CD4-positive, alpha-beta T cell (primary cell): ENCODE measurements at regions of chr15 and their contacts with region 1.

Region 1: DNA sequence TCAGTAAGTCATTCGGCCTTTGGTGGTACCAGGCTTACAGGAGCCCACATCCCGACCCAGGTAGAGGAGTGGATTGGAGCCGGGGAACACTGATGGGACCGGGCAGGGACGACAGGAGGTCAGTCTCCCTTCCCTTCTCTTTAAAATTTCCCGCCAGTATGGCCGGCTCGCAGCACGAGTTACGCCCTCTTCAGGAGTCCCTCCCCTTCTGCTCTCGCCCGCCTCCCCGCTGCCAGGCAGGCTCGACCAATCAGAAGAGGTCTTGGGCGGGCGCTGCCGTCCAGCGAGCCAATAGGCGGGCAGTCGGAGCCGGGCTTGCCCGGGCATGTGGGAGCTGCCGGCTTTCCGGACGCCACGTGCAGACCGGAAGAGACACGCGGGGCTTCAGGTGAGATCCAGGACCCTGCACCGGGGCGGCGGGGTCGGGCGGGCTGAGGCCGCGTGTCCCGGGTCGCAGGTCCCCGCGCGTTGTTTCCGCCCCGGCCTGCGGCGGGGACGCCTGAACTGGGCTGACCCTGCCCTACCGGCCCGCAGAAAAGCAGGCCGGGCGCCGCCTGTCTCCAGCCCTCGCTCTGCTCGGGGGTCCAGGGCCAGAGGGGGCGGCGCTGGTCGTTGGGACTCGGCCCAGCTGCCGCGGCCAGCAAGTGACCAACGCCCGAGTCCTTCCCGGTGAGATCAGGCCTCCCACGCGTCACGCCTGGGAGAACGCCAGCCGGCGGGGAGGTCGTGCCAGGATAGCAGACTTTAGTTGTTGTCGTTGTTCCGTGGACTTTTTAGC is at the start of gene AEN:
- DNase-seq: peak; percentile 91 to 98 (median 94)
- ATAC-seq: peak; percentile 82
- H3K4me3 ChIP-seq: peak within 1 kb of the TSS; percentile 77
- H3K4me3 Mint-ChIP-seq: peak within 1 kb of the TSS; percentile 95
- H3K27ac ChIP-seq: peak within 1 kb of the TSS; percentile 84 to 86
- H3K27ac Mint-ChIP-seq: peak within 1 kb of the TSS; percentile 95
- H3K4me1 ChIP-seq: peaks cover 55% of the 10 kb centered on the region
- H3K4me1 Mint-ChIP-seq: peaks cover 50% of the 10 kb centered on the region
- H3K27me3 ChIP-seq: no peaks in the 10 kb centered on the region
- H3K27me3 Mint-ChIP-seq: peaks cover 9% of the 10 kb centered on the region
- CTCF ChIP-seq: no peak
- total RNA-seq, gene AEN: 40.7 to 43.7 TPM

Region 2: GRCh38 chr15:88323976-88324740 is 297.0 kb before region 1 on chr15:
- CTCF ChIA-PET with region 1: no interaction called
- POLR2A ChIA-PET with region 1: no interaction called
- intact Hi-C with region 1: no loop called
- DNase-seq: no peak
- ATAC-seq: no peak
- H3K4me3 ChIP-seq: no peak overlapping the region
- H3K4me3 Mint-ChIP-seq: no peak overlapping the region
- H3K27ac ChIP-seq: no peak overlapping the region
- H3K27ac Mint-ChIP-seq: no peak overlapping the region
- H3K4me1 ChIP-seq: no peaks in the 10 kb centered on the region
- H3K4me1 Mint-ChIP-seq: no peaks in the 10 kb centered on the region
- H3K27me3 ChIP-seq: no peaks in the 10 kb centered on the region
- H3K27me3 Mint-ChIP-seq: peaks cover 18% of the 10 kb centered on the region
- CTCF ChIP-seq: no peak

Region 3: DNA sequence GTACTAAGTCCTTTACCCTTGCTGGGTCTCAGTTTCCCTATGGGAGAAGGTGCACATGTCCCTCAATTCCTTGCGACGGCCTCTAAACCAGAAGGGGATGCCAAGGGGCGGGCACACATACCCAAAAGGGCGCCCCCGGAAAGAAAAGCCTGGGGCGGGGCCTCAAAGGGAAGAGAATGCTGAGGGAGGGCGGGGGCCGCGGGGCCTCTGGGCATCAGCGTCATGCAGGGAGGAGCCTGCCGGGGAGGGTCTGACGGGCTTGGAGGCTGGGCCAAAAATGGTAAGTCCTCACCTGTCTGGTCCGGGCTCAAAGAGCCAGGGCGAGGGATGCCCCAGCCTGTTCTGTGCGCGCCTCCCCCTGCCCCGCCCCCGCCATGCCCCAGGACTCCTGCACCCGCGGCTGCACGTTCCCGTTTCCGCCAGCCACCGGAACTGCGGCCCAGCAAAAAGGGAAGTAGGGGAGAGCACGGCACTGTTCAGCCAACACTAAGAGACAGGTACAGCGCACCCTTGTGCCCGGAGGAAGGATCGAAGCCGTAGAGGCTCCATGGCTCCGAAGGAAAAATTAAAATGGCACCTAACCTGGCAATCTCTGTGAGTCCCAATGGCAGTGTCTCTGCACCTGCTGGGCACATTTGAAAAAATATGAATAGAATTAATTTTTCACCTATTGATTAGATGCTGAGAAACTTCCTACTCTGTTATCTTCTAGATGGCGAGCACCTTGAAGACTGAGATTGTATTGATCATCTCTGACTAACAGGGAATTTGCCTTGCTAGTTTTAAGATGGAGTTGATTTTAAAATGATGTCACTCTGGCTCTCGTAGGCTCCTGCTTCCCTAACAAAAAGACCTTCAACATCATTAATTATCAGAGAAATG is 74.7 kb before region 1 on chr15 and contains the start of gene DET1:
- CTCF ChIA-PET with region 1: no interaction called
- POLR2A ChIA-PET with region 1: no interaction called
- intact Hi-C with region 1: loop called (anchors 1 to 5 kb)
- DNase-seq: peak; percentile 90 to 98 (median 94)
- ATAC-seq: peak; percentile 91
- H3K4me3 ChIP-seq: peak within 1 kb of the TSS; percentile 66
- H3K4me3 Mint-ChIP-seq: peak within 1 kb of the TSS; percentile 91
- H3K27ac ChIP-seq: peak within 1 kb of the TSS; percentile 64 to 74
- H3K27ac Mint-ChIP-seq: peak within 1 kb of the TSS; percentile 95
- H3K4me1 ChIP-seq: peaks cover 10% of the 10 kb centered on the region
- H3K4me1 Mint-ChIP-seq: peaks cover 19% of the 10 kb centered on the region
- H3K27me3 ChIP-seq: no peaks in the 10 kb centered on the region
- H3K27me3 Mint-ChIP-seq: no peaks in the 10 kb centered on the region
- CTCF ChIP-seq: peak; percentile 74
- total RNA-seq, gene DET1: 2.2 to 2.8 TPM

Region 4: GRCh38 chr15:88664151-88664778 is 43.1 kb after region 1 on chr15:
- CTCF ChIA-PET with region 1: interaction called, 23 read pairs
- POLR2A ChIA-PET with region 1: interaction called, 34 read pairs
- intact Hi-C with region 1: loop called (anchors 1 kb)
- DNase-seq: peak in 11 of 14 experiments; percentile 39 to 82 (median 50)
- ATAC-seq: peak; percentile 93
- H3K4me3 ChIP-seq: no peak overlapping the region
- H3K4me3 Mint-ChIP-seq: no peak overlapping the region
- H3K27ac ChIP-seq: no peak overlapping the region
- H3K27ac Mint-ChIP-seq: peak overlapping the region; percentile 64
- H3K4me1 ChIP-seq: peaks cover 27% of the 10 kb centered on the region
- H3K4me1 Mint-ChIP-seq: peaks cover 53% of the 10 kb centered on the region
- H3K27me3 ChIP-seq: no peaks in the 10 kb centered on the region
- H3K27me3 Mint-ChIP-seq: peaks cover 8% of the 10 kb centered on the region
- CTCF ChIP-seq: peak; percentile 72

Region 5: GRCh38 chr15:88897456-88898194 is 276.4 kb after region 1 on chr15:
- CTCF ChIA-PET with region 1: interaction called, 7 read pairs
- POLR2A ChIA-PET with region 1: no interaction called
- intact Hi-C with region 1: loop called (anchors 2 to 5 kb)
- DNase-seq: peak; percentile 68 to 93 (median 83)
- ATAC-seq: peak; percentile 88
- H3K4me3 ChIP-seq: peak overlapping the region; percentile 20
- H3K4me3 Mint-ChIP-seq: peak overlapping the region; percentile 76
- H3K27ac ChIP-seq: no peak overlapping the region
- H3K27ac Mint-ChIP-seq: peak overlapping the region; percentile 60
- H3K4me1 ChIP-seq: peaks cover 56% of the 10 kb centered on the region
- H3K4me1 Mint-ChIP-seq: peaks cover 49% of the 10 kb centered on the region
- H3K27me3 ChIP-seq: no peaks in the 10 kb centered on the region
- H3K27me3 Mint-ChIP-seq: no peaks in the 10 kb centered on the region
- CTCF ChIP-seq: peak; percentile 63

Region 6: DNA sequence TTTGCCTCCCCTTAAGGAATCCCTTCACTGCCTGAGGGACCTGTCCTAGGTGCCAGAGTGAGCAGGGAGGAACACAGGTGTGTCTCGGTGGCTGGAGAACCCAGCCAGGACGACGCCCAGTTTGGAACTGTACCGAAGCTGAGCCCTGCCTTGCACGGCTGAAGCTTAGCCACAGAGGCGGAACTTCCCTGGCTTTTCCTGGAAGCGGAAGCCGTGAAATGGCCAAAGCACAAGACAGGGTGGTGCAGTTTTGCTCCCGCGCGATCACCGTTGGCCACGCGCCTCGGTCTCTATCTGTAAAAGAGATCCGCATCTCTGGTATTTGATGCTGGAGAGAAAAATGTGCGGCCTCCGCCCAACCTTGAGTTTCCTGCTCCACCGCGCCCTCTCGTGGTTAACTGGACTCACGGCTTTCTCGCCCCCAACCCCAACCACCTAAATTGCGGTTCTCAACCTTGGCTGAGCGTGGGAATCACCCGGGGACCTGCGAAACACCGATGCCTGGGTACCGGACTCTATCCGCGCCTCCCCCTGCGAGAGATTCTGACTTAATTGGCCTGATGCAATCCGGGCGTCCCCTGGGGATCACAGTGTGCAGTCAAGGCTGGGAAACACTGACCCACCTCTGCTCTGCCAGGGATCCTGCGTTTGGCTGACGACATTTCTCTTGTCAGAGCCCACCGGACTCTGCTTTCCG is 396.3 kb after region 1 on chr15:
- CTCF ChIA-PET with region 1: no interaction called
- POLR2A ChIA-PET with region 1: no interaction called
- intact Hi-C with region 1: loop called (anchors 5 to 10 kb)
- DNase-seq: peak; percentile 80 to 95 (median 85)
- ATAC-seq: peak; percentile 95
- H3K4me3 ChIP-seq: peak overlapping the region; percentile 36
- H3K4me3 Mint-ChIP-seq: peak overlapping the region; percentile 20
- H3K27ac ChIP-seq: no peak overlapping the region
- H3K27ac Mint-ChIP-seq: peak overlapping the region; percentile 22
- H3K4me1 ChIP-seq: peaks cover 17% of the 10 kb centered on the region
- H3K4me1 Mint-ChIP-seq: peaks cover 13% of the 10 kb centered on the region
- H3K27me3 ChIP-seq: peaks cover 0 to 2% of the 10 kb centered on the region in 2 experiments
- H3K27me3 Mint-ChIP-seq: peaks cover 14% of the 10 kb centered on the region
- CTCF ChIP-seq: peak; percentile 85

Region 7: GRCh38 chr15:89243691-89244471 is 622.7 kb after region 1 on chr15 and contains the start of gene FANCI:
- CTCF ChIA-PET with region 1: no interaction called
- POLR2A ChIA-PET with region 1: no interaction called
- intact Hi-C with region 1: loop called in 1 of 2 experiments (anchors 10 kb)
- DNase-seq: peak; percentile 92 to 99 (median 96)
- ATAC-seq: peak; percentile 98
- H3K4me3 ChIP-seq: peak within 1 kb of the TSS; percentile 84
- H3K4me3 Mint-ChIP-seq: peak within 1 kb of the TSS; percentile 92
- H3K27ac ChIP-seq: no peak within 1 kb of the TSS
- H3K27ac Mint-ChIP-seq: peak within 1 kb of the TSS; percentile 83
- H3K4me1 ChIP-seq: peaks cover 26% of the 10 kb centered on the region
- H3K4me1 Mint-ChIP-seq: peaks cover 37% of the 10 kb centered on the region
- H3K27me3 ChIP-seq: no peaks in the 10 kb centered on the region
- H3K27me3 Mint-ChIP-seq: no peaks in the 10 kb centered on the region
- CTCF ChIP-seq: no peak
- total RNA-seq, gene FANCI: 6.1 to 7.1 TPM